Mammary epithelial cell (primary cell): ENCODE measurements at regions of chr17 and their contacts with region 1.

Region 1: DNA sequence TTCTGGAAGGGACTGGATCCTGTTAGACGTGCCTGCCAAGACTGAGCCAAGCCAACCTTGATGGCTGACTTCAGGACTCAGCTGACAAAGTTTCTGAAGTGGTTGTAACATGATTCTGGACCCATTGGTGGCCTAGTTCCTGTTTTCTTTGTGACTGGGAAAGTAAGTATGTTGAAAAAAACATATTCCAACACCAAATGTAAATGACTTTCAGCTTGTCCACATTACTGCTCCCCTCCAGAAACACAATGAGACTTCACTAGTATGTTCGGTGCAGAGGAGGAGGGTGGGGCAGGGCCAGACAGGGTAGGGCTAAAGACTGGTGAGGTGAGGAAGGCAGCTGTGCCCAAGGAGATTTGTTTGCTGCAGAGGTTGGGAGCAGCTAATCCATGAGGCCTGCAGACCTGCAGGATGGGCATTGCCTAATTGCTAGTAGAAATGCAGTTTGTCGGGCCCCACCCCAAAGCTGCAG is 26.4 kb downstream of the NMT1 start:
- DNase-seq: no peak
- H3K4me3 ChIP-seq: no peak overlapping the region
- H3K27ac ChIP-seq: no peak overlapping the region
- H3K4me1 ChIP-seq: peaks cover under 1% of the 10 kb centered on the region
- H3K27me3 ChIP-seq: no peaks in the 10 kb centered on the region
- CTCF ChIP-seq: no peak

Region 2: DNA sequence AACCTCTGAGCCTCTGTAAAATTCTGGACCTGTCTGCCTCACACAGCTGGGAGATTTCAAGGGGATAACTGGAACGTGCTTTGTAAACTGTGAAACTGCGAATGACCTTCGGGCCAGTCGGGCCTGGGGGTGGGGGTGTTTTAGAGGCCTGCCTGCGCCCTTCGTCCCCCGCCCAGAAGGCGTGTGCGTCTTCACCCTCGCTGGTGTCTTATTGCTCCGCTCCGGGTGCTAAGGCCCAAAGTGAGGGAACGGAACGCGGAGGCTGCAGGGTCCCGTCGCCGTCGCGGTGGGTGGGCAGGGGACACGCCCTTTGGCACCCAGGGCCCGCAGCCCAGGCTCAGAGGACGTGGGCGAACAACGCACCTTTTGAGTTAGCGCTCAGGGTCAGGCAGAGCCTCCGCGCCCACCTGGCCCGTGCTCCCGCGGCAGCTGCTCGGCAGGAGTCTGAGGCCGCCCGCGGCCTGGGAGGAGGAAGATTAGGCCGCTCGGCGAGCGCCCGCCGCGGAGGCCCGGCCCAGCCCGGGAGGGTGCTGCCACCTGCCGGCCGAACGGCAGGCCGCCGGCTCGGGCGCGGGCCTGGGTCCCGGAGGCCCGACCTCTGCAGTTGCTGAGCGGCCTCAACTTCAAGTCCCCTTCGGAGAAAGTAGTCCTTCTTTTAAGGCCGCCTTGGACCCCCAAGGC is 65.8 kb before region 1 on chr17:
- CTCF ChIA-PET with region 1: no interaction called
- dilution Hi-C with region 1: loop called (anchors 5 kb)
- in situ Hi-C with region 1: no loop called
- intact Hi-C with region 1: no loop called
- DNase-seq: peak; percentile 39
- H3K4me3 ChIP-seq: peak overlapping the region in 1 of 3 experiments; percentile 24
- H3K27ac ChIP-seq: no peak overlapping the region
- H3K4me1 ChIP-seq: peaks cover 14% of the 10 kb centered on the region
- H3K27me3 ChIP-seq: no peaks in the 10 kb centered on the region
- CTCF ChIP-seq: peak; percentile 57 to 71

Region 3: DNA sequence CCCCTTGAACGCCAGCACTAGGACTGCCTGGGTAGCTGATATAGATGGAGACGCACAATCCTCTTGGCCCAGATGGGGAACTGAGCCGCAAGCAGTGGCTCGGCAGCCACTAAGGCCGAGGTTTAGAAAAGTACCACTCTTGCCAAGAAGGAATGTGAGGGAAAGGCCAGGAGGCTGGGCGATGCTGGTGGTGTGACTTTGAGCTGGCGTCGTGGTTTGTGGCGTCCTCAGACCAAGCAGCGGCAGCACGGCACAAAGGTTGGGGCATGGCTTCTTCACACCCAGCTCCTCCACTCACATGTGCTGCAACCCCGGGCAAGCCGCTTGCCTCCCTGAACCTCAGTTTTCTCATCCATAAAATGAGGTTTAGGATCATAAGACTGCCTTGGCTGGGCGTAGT is 51.7 kb before region 1 on chr17:
- CTCF ChIA-PET with region 1: no interaction called
- dilution Hi-C with region 1: no loop called
- in situ Hi-C with region 1: no loop called
- intact Hi-C with region 1: no loop called
- DNase-seq: no peak
- H3K4me3 ChIP-seq: no peak overlapping the region
- H3K27ac ChIP-seq: no peak overlapping the region
- H3K4me1 ChIP-seq: peaks cover 8% of the 10 kb centered on the region
- H3K27me3 ChIP-seq: no peaks in the 10 kb centered on the region
- CTCF ChIP-seq: no peak

Region 4: GRCh38 chr17:45172454-45173286 is 85.1 kb after region 1 on chr17:
- CTCF ChIA-PET with region 1: no interaction called
- dilution Hi-C with region 1: no loop called
- in situ Hi-C with region 1: no loop called
- intact Hi-C with region 1: no loop called
- DNase-seq: peak; percentile 96
- H3K4me3 ChIP-seq: peak overlapping the region; percentile 40 to 58 (median 49)
- H3K27ac ChIP-seq: peak overlapping the region; percentile 99
- H3K4me1 ChIP-seq: peaks cover 55% of the 10 kb centered on the region
- H3K27me3 ChIP-seq: no peaks in the 10 kb centered on the region
- CTCF ChIP-seq: peak; percentile 13 to 46